Activated B cell treated with CpG ODN at 0.5 μM for 24 hours (primary cell): ENCODE measurements at regions of chr5 and their contacts with region 1.

Region 1: GRCh38 chr5:65989158-65989557 is 62.8 kb downstream of the ERBIN start:
- DNase-seq: no peak
- ATAC-seq: no peak
- H3K4me3 Mint-ChIP-seq: no peak overlapping the region
- H3K27ac Mint-ChIP-seq: no peak overlapping the region
- H3K4me1 Mint-ChIP-seq: peaks cover 26% of the 10 kb centered on the region
- H3K27me3 Mint-ChIP-seq: no peaks in the 10 kb centered on the region
- CTCF ChIP-seq: no peak

Region 2: GRCh38 chr5:65883461-65883860 is 105.7 kb before region 1 on chr5:
- CTCF ChIA-PET with region 1: no interaction called
- POLR2A ChIA-PET with region 1: no interaction called
- intact Hi-C with region 1: no loop called
- DNase-seq: no peak
- ATAC-seq: no peak
- H3K4me3 Mint-ChIP-seq: no peak overlapping the region
- H3K27ac Mint-ChIP-seq: no peak overlapping the region
- H3K4me1 Mint-ChIP-seq: no peaks in the 10 kb centered on the region
- H3K27me3 Mint-ChIP-seq: peaks cover 10% of the 10 kb centered on the region
- CTCF ChIP-seq: no peak

Region 3: DNA sequence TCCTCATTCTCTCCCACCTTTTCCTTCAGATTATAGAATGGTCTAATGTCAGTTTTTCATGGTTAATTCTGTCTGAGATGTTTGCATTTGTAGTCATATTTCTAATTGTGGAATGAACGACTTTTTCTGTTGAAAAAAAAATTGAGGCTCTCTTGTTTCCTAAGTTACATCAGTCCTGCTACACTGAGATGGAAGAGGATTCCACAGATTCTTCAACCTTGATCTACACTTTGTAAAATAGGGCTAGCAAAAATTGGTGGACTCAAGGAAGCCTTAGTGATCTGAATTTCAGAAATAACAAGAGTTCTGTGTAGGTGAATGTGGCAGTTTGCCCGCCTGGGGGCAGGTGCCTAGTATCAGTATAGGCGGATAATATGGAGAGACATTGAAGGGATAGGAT is 10.9 kb before region 1 on chr5:
- CTCF ChIA-PET with region 1: no interaction called
- POLR2A ChIA-PET with region 1: no interaction called
- intact Hi-C with region 1: no loop called
- DNase-seq: no peak
- ATAC-seq: no peak
- H3K4me3 Mint-ChIP-seq: no peak overlapping the region
- H3K27ac Mint-ChIP-seq: peak overlapping the region; percentile 9
- H3K4me1 Mint-ChIP-seq: peaks cover 30% of the 10 kb centered on the region
- H3K27me3 Mint-ChIP-seq: no peaks in the 10 kb centered on the region
- CTCF ChIP-seq: no peak

Region 4: DNA sequence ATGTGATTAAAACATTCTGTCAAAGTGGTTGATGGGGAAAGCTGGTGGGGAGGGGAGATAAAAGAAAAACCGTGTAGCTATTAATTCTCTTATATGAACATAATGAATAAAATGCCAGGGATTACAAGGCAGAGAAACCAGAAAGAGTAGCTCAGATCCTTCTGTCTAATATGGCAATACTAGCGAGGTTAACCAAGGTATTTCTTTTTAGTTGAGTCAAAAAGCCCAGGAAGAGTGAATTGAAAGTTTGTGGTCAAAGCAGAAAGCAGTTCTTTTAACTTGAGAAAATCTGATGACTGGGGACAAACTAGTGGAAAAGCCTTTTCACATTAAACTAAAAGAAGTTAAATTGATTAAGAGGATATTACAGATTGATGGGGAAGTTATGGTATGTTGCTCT is 13.3 kb after region 1 on chr5:
- CTCF ChIA-PET with region 1: no interaction called
- POLR2A ChIA-PET with region 1: no interaction called
- intact Hi-C with region 1: loop called (anchors 2 kb)
- DNase-seq: no peak
- ATAC-seq: no peak
- H3K4me3 Mint-ChIP-seq: no peak overlapping the region
- H3K27ac Mint-ChIP-seq: peak overlapping the region; percentile 13
- H3K4me1 Mint-ChIP-seq: peaks cover 19% of the 10 kb centered on the region
- H3K27me3 Mint-ChIP-seq: no peaks in the 10 kb centered on the region
- CTCF ChIP-seq: no peak